Activated CD4-positive, alpha-beta T cell treated with anti-CD3 and anti-CD28 coated beads for 36 hours (primary cell): ENCODE measurements at regions of chr20 and their contacts with region 1.

Region 1: DNA sequence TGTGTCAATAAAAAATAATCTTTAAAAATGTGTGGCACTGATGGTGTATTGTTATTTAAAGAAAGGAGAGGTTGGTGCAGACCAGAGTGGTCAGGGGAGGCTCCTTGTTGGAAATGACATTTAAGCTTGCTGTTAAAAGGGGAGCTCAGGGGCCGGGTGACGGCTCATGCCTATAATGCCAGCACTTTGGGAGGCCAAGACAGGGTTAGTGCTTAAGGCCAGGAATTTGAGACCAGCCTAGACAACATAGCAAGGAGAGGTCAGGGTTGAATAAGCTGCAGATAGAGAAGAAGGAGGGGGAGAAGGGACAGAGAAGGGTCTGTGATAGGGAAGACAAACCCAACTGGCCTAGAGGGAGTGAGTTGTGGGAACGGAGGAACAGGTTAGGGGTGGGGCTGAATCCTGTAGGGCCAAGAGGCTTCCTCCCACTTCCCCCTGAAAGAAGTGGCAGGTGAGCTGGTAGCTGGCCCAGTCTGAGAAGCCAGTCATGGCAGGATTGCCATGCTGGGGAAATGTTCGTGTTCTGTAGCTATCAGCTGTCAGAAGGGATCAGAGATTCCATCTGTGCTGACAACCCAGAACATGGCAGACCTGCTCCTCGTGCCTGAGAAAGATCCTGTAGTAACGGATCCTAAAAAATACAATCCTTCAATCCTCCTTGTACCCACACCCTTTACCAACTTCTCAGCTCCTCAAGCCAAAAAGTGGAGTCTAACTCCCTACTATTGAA is 42.8 kb downstream of the BANF2 start:
- DNase-seq: no peak
- ATAC-seq: no peak
- H3K4me3 Mint-ChIP-seq: no peak overlapping the region
- H3K27ac Mint-ChIP-seq: no peak overlapping the region
- H3K4me1 Mint-ChIP-seq: no peaks in the 10 kb centered on the region
- H3K27me3 Mint-ChIP-seq: no peaks in the 10 kb centered on the region

Region 2: GRCh38 chr20:17304774-17305173 is 437.8 kb before region 1 on chr20:
- CTCF ChIA-PET with region 1: no interaction called
- POLR2A ChIA-PET with region 1: no interaction called
- intact Hi-C with region 1: loop called in 1 of 2 experiments (anchors 5 kb)
- DNase-seq: no peak
- ATAC-seq: no peak
- H3K4me3 Mint-ChIP-seq: no peak overlapping the region
- H3K27ac Mint-ChIP-seq: no peak overlapping the region
- H3K4me1 Mint-ChIP-seq: no peaks in the 10 kb centered on the region
- H3K27me3 Mint-ChIP-seq: peaks cover 2% of the 10 kb centered on the region

Region 3: DNA sequence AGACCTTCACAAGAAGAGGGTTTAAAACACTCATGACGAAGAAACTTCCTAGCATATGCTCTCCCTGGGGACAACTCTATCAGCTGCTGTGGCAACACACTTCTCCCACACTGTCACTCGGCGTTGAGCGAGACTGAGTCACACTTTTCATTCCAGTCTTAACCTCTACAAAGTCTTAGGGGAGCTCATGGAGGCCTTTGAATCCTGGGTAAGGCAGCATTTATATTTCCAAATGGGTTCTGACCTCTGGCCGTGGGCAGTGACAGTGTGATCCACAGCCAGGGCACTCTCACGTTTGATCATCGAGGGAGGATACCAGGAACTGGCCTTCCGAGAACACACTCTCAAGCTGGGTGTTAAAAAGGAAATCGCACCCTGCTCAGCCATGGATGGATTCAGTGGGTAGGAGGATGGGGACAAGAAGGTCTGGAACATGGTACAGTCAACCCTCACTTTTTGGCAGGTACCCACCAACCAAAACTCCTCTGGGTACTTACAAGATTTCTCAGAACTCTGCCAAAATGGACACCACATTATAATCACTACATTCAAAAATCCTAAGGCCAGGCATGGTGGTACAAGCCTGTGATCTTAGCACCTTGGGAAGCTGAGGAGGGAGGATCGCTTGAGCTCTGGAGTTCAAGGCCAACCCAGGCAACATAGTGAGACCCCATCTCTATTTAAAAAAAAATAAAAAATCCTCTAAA is 80.1 kb before region 1 on chr20:
- CTCF ChIA-PET with region 1: no interaction called
- POLR2A ChIA-PET with region 1: no interaction called
- intact Hi-C with region 1: no loop called
- DNase-seq: peak; percentile 9
- ATAC-seq: peak; percentile 34
- H3K4me3 Mint-ChIP-seq: no peak overlapping the region
- H3K27ac Mint-ChIP-seq: no peak overlapping the region
- H3K4me1 Mint-ChIP-seq: peaks cover 39% of the 10 kb centered on the region
- H3K27me3 Mint-ChIP-seq: no peaks in the 10 kb centered on the region